Activated naive CD8-positive, alpha-beta T cell treated with anti-CD3 and anti-CD28 coated beads, Interleukin-2, amount 10 ng/mL, durations not matched to agents 7 days and 5 days (primary cell): ENCODE measurements at regions of chr9 and their contacts with region 1.

Region 1: GRCh38 chr9:20209391-20210340 is 412.6 kb downstream of the MLLT3 start:
- DNase-seq: peak; percentile 70
- ATAC-seq: peak; percentile 88
- H3K4me3 Mint-ChIP-seq: peak overlapping the region; percentile 18
- H3K27ac Mint-ChIP-seq: peak overlapping the region; percentile 95
- H3K4me1 Mint-ChIP-seq: peaks cover 50% of the 10 kb centered on the region
- H3K27me3 Mint-ChIP-seq: no peaks in the 10 kb centered on the region

Region 2: GRCh38 chr9:19999491-20000057 is 210.1 kb before region 1 on chr9:
- POLR2A ChIA-PET with region 1: interaction called, 24 read pairs
- DNase-seq: peak; percentile 58
- ATAC-seq: peak; percentile 95
- H3K4me3 Mint-ChIP-seq: peak overlapping the region; percentile 50
- H3K27ac Mint-ChIP-seq: peak overlapping the region; percentile 93
- H3K4me1 Mint-ChIP-seq: peaks cover 40% of the 10 kb centered on the region
- H3K27me3 Mint-ChIP-seq: no peaks in the 10 kb centered on the region

Region 3: DNA sequence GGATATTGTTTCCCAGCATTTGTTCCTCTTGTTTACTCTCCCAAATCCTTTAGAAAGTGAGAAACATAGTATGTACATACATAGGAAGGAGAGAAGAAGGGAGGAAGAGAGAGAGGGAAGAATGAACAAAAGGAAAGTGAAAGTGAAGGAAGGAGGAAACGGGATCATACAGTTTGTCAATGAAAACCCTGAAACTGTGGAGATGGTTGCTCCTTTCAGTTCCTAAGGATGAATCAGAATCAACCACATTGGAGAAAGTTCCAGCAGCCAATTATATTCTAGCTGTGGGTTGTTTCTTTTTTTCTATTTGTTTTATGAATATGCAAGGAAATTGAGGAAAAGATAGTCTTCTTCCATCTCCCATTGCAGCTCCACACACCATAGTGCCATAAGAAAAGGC is 16.2 kb after region 1 on chr9:
- POLR2A ChIA-PET with region 1: interaction called, 12 read pairs
- DNase-seq: no peak
- ATAC-seq: no peak
- H3K4me3 Mint-ChIP-seq: peak overlapping the region; percentile 68
- H3K27ac Mint-ChIP-seq: peak overlapping the region; percentile 80
- H3K4me1 Mint-ChIP-seq: peaks cover 57% of the 10 kb centered on the region
- H3K27me3 Mint-ChIP-seq: no peaks in the 10 kb centered on the region

Region 4: DNA sequence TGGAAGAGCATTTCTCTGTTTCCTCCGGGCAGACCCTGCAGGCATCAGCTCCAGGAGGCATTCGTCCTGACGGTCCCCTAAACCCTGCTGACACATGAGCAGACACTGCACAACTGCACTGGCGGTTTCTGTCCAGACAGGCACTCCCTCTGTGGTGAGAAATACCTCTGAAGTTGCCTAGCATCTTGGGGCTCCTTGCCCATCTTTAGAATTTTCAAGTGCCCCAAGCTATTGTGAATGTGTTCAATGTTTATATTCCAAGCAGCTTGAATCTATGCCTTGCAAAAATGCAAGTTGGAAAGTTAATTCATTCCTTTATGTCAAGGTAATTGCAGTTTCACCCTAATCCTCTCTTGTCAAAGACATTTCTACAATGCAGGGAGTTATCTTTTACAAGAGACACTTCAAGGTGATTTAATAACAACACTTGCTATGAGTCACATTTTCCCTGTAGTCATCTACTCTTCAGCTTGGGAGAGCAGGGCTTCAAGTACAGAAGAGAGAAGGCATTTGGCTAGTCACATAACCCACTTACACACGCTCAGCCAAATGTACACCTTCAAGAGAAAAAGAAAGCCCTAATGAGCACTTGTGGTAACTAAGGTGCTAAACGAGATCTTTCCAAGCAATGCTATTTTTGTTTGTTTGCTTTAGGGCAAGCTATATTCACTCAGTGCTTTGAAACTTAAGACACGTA is 110.1 kb after region 1 on chr9:
- POLR2A ChIA-PET with region 1: interaction called, 21 read pairs
- DNase-seq: no peak
- ATAC-seq: peak; percentile 43
- H3K4me3 Mint-ChIP-seq: peak overlapping the region; percentile 11
- H3K27ac Mint-ChIP-seq: peak overlapping the region; percentile 89
- H3K4me1 Mint-ChIP-seq: peaks cover 81% of the 10 kb centered on the region
- H3K27me3 Mint-ChIP-seq: no peaks in the 10 kb centered on the region